Heart left ventricle (tissue), 16 donors: ENCODE measurements at regions of chr16 and their contacts with region 1.

Region 1: GRCh38 chr16:58755989-58756649 is 22.0 kb upstream of the GOT2 start:
- DNase-seq: peak; percentile 57 to 75 (median 69)
- ATAC-seq: peak; percentile 84 to 96 (median 91)
- H3K4me3 ChIP-seq: peak overlapping the region in 1 of 12 donors; percentile 11
- H3K27ac ChIP-seq: peak overlapping the region in 1 of 12 donors; percentile 28
- H3K4me1 ChIP-seq: peaks cover 0 to 9% (median 0%) of the 10 kb centered on the region in 12 donors
- H3K27me3 ChIP-seq: no peaks in the 10 kb centered on the region
- CTCF ChIP-seq: peak in 11 of 12 donors; percentile 49 to 79 (median 64)
- POLR2A ChIP-seq: no peak

Region 2: DNA sequence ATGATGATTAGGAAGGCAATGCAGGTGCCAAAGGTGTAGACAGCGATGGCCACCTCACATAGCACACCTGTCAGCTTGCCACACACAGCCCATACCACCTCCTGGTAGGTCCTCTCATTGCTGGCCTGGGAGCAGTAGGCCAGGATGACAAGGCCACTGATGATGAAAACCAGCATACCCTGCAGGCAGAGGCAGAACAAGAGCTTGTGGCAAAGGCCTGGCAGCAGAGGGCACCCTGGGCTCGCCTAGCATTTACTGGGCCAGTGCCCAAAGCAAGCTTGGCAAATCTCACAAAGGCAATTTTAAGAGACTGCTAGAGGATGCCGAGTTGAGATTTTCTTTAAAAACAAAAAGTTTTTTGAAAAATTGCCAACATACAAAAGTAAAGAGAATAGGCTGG is 77.4 kb before region 1 on chr16:
- intact Hi-C with region 1: loop called (anchors 1 to 5 kb)
- DNase-seq: peak in 4 of 5 donors; percentile 43 to 72 (median 58)
- ATAC-seq: peak; percentile 70 to 80 (median 77)
- H3K4me3 ChIP-seq: no peak overlapping the region
- H3K27ac ChIP-seq: no peak overlapping the region
- H3K4me1 ChIP-seq: peaks cover 0 to 22% (median 9%) of the 10 kb centered on the region in 12 donors
- H3K27me3 ChIP-seq: no peaks in the 10 kb centered on the region
- CTCF ChIP-seq: peak in 11 of 12 donors; percentile 13 to 62 (median 51)
- POLR2A ChIP-seq: no peak